ENCODE measurements at regions of chr4 and their contacts with region 1.

Region 1: DNA sequence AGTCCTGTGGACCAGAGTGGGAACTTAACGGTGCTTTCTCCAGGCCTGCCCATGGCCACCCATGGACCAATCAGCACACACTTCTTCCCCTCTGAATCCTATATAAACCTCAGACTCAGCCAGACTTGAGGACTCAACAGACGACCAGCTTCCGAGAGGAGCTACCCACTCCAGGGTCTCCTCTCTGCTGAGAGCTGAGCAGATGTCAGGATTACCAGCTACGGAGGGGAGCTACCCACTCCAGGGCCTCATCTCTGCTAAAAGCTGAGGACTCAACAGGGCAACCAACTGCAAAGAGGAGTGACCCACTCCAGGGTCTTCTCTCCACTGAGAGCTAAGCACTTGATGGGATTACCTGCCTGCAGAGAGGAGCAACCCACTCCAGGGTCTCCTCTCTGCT is 80.0 kb upstream of the DDX60 start:
- DNase-seq: no peak
- ATAC-seq: no peak
- H3K4me3 ChIP-seq: no peak overlapping the region
- H3K4me3 Mint-ChIP-seq: no peak overlapping the region
- H3K27ac ChIP-seq: no peak overlapping the region
- H3K27ac Mint-ChIP-seq: no peak overlapping the region
- H3K4me1 ChIP-seq: no peaks in the 10 kb centered on the region
- H3K4me1 Mint-ChIP-seq: peaks cover 0 to 6% (median 0%) of the 10 kb centered on the region in 7 donors
- H3K27me3 ChIP-seq: no peaks in the 10 kb centered on the region
- H3K27me3 Mint-ChIP-seq: no peaks in the 10 kb centered on the region

Region 2: DNA sequence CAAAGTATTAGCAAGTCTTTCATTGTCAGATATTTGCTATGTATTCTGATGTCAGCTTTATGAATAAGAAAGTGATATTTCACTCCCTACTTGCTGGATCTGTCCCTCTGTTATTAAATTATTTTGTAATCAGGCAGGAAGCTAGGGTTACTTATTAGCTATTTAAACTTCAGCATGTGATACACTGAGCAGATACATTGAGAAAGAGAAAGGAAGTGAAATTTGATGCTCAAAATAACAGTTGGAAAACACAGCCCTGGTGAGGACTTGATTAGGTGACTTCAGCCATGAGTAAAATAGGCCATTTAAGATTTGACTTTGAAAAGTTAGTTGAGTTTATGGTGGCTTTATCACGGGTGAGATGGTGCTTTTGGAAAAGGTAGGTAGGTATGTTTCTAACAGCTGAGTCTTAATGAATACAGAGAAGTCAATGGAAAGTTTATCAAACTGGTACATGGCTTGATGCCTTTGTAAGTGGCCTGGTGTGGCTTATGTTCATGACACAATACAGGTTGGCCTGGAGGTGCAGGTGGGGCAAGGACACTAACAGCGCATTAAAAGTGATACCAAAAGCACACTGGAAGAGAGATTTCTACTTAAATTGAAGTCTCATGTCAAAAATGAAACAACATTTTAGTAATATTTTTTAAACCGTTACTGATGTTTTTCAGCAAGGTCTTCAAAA is 843.1 kb before region 1 on chr4:
- CTCF ChIA-PET with region 1: no interaction called
- POLR2A ChIA-PET with region 1: no interaction called
- intact Hi-C with region 1: no loop called
- DNase-seq: no peak
- ATAC-seq: no peak
- H3K4me3 ChIP-seq: no peak overlapping the region
- H3K4me3 Mint-ChIP-seq: no peak overlapping the region
- H3K27ac ChIP-seq: no peak overlapping the region
- H3K27ac Mint-ChIP-seq: no peak overlapping the region
- H3K4me1 ChIP-seq: no peaks in the 10 kb centered on the region
- H3K4me1 Mint-ChIP-seq: no peaks in the 10 kb centered on the region
- H3K27me3 ChIP-seq: no peaks in the 10 kb centered on the region
- H3K27me3 Mint-ChIP-seq: no peaks in the 10 kb centered on the region

Region 3: GRCh38 chr4:168269896-168270295 is 128.7 kb before region 1 on chr4:
- CTCF ChIA-PET with region 1: no interaction called
- POLR2A ChIA-PET with region 1: no interaction called
- intact Hi-C with region 1: loop called in 1 of 2 experiments (anchors 10 kb)
- DNase-seq: no peak
- ATAC-seq: no peak
- H3K4me3 ChIP-seq: no peak overlapping the region
- H3K4me3 Mint-ChIP-seq: no peak overlapping the region
- H3K27ac ChIP-seq: no peak overlapping the region
- H3K27ac Mint-ChIP-seq: no peak overlapping the region
- H3K4me1 ChIP-seq: no peaks in the 10 kb centered on the region
- H3K4me1 Mint-ChIP-seq: peaks cover 0 to 18% (median 10%) of the 10 kb centered on the region in 7 donors
- H3K27me3 ChIP-seq: no peaks in the 10 kb centered on the region
- H3K27me3 Mint-ChIP-seq: no peaks in the 10 kb centered on the region

Measured in naive thymus-derived CD4-positive, alpha-beta T cell (primary cell).